Heart right ventricle (tissue), 16 donors: ENCODE measurements at regions of chr14 and their contacts with region 1.

Region 1: DNA sequence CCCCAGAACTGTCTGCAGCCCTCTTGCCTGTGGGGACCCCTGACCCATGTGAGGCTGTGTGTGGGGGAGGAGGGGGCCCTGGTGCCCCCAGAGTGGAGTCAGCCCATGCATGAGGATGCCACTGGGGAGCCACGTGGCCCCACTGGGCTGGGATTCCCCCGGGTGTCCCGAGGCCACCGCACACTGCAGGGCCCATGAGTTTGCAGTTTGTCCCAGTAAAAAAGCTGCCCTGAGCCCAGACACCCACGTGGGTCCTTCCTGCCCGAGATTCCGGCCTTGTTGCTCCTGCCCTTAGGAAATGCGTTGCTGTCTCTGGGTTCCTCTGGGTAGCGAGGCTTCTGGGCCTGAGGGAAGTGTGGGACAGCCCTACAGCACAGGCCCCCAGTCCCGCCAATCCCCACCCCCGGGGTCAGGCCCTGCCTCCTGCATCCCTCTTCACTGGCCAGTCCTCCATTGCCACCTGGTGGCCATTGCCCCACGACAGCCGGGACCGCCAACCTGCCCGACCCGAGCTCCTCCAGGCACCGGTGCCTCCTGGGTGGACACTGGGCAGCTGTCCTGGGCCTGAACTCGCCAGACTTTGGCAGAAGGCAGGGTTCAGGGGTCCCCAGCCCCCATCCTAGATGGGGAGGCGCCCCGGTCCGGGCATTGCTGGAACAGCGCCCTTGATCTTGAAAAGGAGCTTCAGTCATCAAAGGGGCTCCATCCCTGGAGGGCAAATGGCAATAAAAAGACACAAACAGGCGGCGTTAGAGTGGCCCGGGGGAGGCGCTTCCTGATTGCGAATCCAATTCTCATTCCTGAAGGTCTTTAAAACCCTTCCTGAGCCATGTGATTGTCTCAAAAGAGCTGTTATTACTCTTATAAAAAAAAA is 15.6 kb upstream of the C14orf180 start:
- DNase-seq: peak; percentile 77 to 80
- ATAC-seq: peak; percentile 72 to 92 (median 85)
- H3K4me3 ChIP-seq: no peak overlapping the region
- H3K27ac ChIP-seq: no peak overlapping the region
- H3K4me1 ChIP-seq: peaks cover 3 to 29% (median 14%) of the 10 kb centered on the region in 9 donors
- H3K27me3 ChIP-seq: peaks cover 0 to 36% (median 22%) of the 10 kb centered on the region in 7 donors
- CTCF ChIP-seq: peak; percentile 66 to 92 (median 88)

Region 2: GRCh38 chr14:104078031-104078455 is 485.9 kb before region 1 on chr14:
- intact Hi-C with region 1: loop called in 8 of 10 experiments (anchors 1 to 5 kb)
- DNase-seq: peak; percentile 83 to 86
- ATAC-seq: peak; percentile 69 to 92 (median 88)
- H3K4me3 ChIP-seq: no peak overlapping the region
- H3K27ac ChIP-seq: no peak overlapping the region
- H3K4me1 ChIP-seq: peaks cover 0 to 6% (median 4%) of the 10 kb centered on the region in 9 donors
- H3K27me3 ChIP-seq: peaks cover 0 to 17% (median 4%) of the 10 kb centered on the region in 7 donors
- CTCF ChIP-seq: peak; percentile 98 to 100 (median 100)

Region 3: DNA sequence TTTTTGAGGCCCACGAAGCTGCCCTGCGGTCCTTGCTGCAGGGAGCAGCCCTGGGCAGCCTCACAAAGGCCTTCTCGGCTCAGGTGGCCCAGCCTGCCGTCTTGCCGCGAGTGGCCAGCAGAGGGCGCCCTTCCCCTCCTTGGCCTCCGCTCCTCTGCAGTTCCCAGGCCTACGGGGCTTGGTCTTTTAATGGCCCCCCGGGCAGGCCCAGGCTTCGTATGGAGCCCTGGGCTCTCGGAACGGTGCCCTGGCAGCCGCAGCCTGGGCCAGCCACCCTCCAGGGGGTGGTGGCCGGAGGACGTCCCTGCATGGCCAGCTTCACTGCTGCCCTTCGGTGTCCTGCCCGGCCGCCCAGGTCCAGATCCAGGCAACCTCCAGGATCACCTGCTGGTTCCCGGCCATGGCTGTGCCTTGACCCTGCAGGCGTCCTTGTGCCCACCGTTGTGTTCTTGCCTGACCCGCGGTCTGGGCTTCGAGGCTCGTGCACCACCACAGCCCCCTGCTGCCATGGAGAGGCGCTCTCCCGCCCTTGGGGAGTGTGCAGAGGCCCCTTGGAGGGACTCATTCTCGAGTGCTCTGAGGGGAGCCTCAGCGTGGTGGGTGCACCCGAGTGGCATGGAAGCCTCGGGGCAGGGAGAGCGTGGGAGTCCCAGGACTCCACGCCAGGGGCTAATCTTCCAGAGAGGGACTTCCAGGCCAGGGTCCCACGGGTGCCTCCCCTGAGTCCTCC is 469.1 kb before region 1 on chr14:
- intact Hi-C with region 1: loop called in 1 of 10 experiments (anchors 5 kb)
- DNase-seq: peak; percentile 47 to 63
- ATAC-seq: peak; percentile 31 to 67 (median 60)
- H3K4me3 ChIP-seq: no peak overlapping the region
- H3K27ac ChIP-seq: no peak overlapping the region
- H3K4me1 ChIP-seq: peaks cover 0 to 6% (median 0%) of the 10 kb centered on the region in 9 donors
- H3K27me3 ChIP-seq: peaks cover 0 to 21% (median 10%) of the 10 kb centered on the region in 7 donors
- CTCF ChIP-seq: peak; percentile 81 to 93 (median 89)

Region 4: GRCh38 chr14:104356020-104356737 is 207.8 kb before region 1 on chr14:
- intact Hi-C with region 1: loop called in 1 of 10 experiments (anchors 5 kb)
- DNase-seq: no peak
- ATAC-seq: peak in 3 of 8 donors; percentile 25 to 49 (median 31)
- H3K4me3 ChIP-seq: no peak overlapping the region
- H3K27ac ChIP-seq: peak overlapping the region in 1 of 10 donors; percentile 3
- H3K4me1 ChIP-seq: peaks cover 0 to 22% (median 5%) of the 10 kb centered on the region in 9 donors
- H3K27me3 ChIP-seq: peaks cover 0 to 27% (median 3%) of the 10 kb centered on the region in 7 donors
- CTCF ChIP-seq: no peak

Region 5: DNA sequence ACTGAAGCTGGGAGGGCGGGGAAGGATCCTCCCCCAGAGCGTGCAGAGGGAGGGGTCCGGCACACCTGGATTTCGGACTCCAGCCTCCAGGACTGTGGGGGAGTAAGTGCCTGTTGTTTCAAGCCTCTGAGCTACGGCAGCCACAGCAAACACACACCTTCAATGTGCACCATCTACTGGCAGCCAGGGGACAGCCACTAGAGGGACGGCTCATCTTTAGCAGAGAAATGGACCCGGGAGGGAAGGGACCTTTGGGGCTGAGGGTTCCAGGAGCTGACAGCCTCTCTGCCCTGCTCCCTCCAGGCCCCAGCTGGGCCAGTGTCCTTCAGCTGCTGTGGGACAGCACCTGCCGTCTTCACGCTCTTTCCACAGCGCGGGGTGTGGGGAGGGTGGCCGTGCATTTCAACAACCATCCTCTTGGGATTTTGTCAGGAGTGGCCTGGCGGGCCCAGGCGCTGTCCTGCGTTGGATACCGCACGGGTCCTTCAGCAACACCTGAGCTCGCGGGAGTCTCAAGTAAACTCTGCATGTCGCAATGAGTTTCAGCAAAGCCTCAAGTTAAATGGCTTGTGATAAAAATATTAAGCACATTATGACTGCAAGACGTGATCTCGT is 193.6 kb before region 1 on chr14:
- intact Hi-C with region 1: loop called in 1 of 10 experiments (anchors 1 kb)
- DNase-seq: peak; percentile 9 to 27
- ATAC-seq: peak; percentile 23 to 86 (median 74)
- H3K4me3 ChIP-seq: no peak overlapping the region
- H3K27ac ChIP-seq: no peak overlapping the region
- H3K4me1 ChIP-seq: no peaks in the 10 kb centered on the region
- H3K27me3 ChIP-seq: peaks cover 0 to 33% (median 10%) of the 10 kb centered on the region in 7 donors
- CTCF ChIP-seq: peak; percentile 12 to 70 (median 57)

Region 6: GRCh38 chr14:104545151-104545941 is 18.6 kb before region 1 on chr14:
- intact Hi-C with region 1: no loop called
- DNase-seq: no peak
- ATAC-seq: peak in 3 of 8 donors; percentile 9 to 44 (median 22)
- H3K4me3 ChIP-seq: peak overlapping the region in 1 of 10 donors; percentile 22
- H3K27ac ChIP-seq: no peak overlapping the region
- H3K4me1 ChIP-seq: peaks cover 0 to 11% (median 4%) of the 10 kb centered on the region in 9 donors
- H3K27me3 ChIP-seq: peaks cover 0 to 76% (median 47%) of the 10 kb centered on the region in 7 donors
- CTCF ChIP-seq: peak in 1 of 9 donors; percentile 20

Region 7: GRCh38 chr14:104633276-104634137 is 69.5 kb after region 1 on chr14:
- intact Hi-C with region 1: loop called in 3 of 10 experiments (anchors 5 to 10 kb)
- DNase-seq: no peak
- ATAC-seq: peak in 1 of 8 donors; percentile 45
- H3K4me3 ChIP-seq: no peak overlapping the region
- H3K27ac ChIP-seq: no peak overlapping the region
- H3K4me1 ChIP-seq: no peaks in the 10 kb centered on the region
- H3K27me3 ChIP-seq: peaks cover 0 to 49% (median 17%) of the 10 kb centered on the region in 7 donors
- CTCF ChIP-seq: no peak

Region 8: DNA sequence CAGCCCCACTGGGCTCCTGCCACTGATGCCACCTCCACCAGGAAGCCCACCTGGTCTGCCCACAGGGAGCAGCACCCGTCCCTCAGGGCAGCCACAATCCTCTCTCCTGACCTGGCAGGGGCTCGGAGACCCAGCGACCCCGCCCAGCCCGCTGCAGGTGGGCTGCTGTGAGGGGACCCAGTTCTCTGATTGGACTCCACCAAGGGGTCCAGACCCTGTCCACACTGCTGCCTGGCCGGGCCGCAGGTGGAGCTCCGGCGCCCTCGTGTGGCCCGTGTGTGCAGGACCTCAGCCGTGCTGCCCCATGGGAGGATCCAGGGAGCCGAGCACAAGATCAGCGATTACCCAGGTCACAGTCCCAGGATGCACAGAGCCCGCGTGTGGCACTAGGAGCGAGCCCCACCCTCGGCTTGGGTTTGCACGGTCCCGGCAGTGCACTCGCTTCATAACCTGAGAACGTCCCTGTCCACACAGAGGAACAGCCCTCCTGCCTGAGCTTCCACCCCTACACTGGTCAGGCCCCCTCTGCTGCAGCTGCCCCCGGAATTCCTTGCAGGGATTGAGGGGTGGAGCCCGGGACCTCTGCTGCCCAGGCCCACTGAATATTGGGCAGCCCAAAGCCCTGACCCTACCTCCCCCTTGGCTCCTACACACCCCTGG is 76.0 kb after region 1 on chr14:
- intact Hi-C with region 1: loop called in 2 of 10 experiments (anchors 5 to 10 kb)
- DNase-seq: peak; percentile 48 to 62
- ATAC-seq: peak; percentile 77 to 95 (median 86)
- H3K4me3 ChIP-seq: no peak overlapping the region
- H3K27ac ChIP-seq: no peak overlapping the region
- H3K4me1 ChIP-seq: peaks cover 0 to 16% (median 4%) of the 10 kb centered on the region in 9 donors
- H3K27me3 ChIP-seq: peaks cover 0 to 46% (median 20%) of the 10 kb centered on the region in 7 donors
- CTCF ChIP-seq: peak; percentile 75 to 94 (median 92)